ENCODE measurements at regions of chr7 and their contacts with region 1.

Region 1: DNA sequence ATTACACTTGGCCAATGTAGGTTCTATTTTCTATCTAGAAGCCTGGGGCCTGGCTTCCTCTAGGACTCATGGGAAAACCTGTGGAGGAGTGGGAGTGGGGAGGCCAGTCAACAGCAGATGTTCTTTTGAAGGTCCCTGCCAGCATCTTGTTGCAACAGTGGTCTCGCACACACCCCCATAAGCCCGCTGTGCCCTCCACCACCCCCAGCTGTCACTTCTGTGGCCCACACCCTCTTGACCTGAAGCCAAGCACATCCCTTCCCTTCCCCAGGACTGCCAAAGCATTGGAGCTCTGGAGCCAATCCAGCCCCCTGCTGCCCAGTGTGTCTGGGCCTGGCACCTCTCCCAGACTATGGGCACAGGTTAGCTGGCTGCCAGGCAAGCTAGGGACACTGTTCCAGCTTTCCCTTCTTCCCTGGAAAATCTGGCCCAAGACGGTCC is 1.9 kb upstream of the STX1A start:
- DNase-seq: no peak
- ATAC-seq: no peak
- H3K4me3 ChIP-seq: no peak overlapping the region
- H3K27ac ChIP-seq: no peak overlapping the region
- H3K4me1 ChIP-seq: peaks cover 10 to 33% of the 10 kb centered on the region in 2 donors
- H3K27me3 ChIP-seq: peaks cover 0 to 63% of the 10 kb centered on the region in 2 donors
- CTCF ChIP-seq: no peak

Region 2: GRCh38 chr7:73578342-73579127 is 142.9 kb before region 1 on chr7 and contains the start of gene TBL2:
- intact Hi-C with region 1: no loop called
- DNase-seq: peak; percentile 94 to 100 (median 99)
- ATAC-seq: peak; percentile 96
- H3K4me3 ChIP-seq: peak within 1 kb of the TSS; percentile 77 to 95
- H3K27ac ChIP-seq: peak within 1 kb of the TSS; percentile 87 to 91
- H3K4me1 ChIP-seq: peaks cover 7 to 65% of the 10 kb centered on the region in 2 donors
- H3K27me3 ChIP-seq: no peaks in the 10 kb centered on the region
- CTCF ChIP-seq: peak; percentile 0 to 18
- polyA plus RNA-seq, gene TBL2: 35.4 to 41.0 (median 39.8) TPM

Region 3: GRCh38 chr7:73606801-73607691 is 114.4 kb before region 1 on chr7:
- intact Hi-C with region 1: loop called (anchors 5 to 10 kb)
- DNase-seq: peak in 3 of 4 donors; percentile 31 to 92 (median 54)
- ATAC-seq: peak; percentile 84
- H3K4me3 ChIP-seq: no peak overlapping the region
- H3K27ac ChIP-seq: no peak overlapping the region
- H3K4me1 ChIP-seq: peaks cover 0 to 8% of the 10 kb centered on the region in 2 donors
- H3K27me3 ChIP-seq: peaks cover 0 to 69% of the 10 kb centered on the region in 2 donors
- CTCF ChIP-seq: peak; percentile 94

Region 4: GRCh38 chr7:73612598-73613269 is 108.7 kb before region 1 on chr7:
- intact Hi-C with region 1: loop called (anchors 5 to 10 kb)
- DNase-seq: peak in 1 of 4 donors; percentile 19
- ATAC-seq: peak; percentile 31
- H3K4me3 ChIP-seq: no peak overlapping the region
- H3K27ac ChIP-seq: no peak overlapping the region
- H3K4me1 ChIP-seq: no peaks in the 10 kb centered on the region
- H3K27me3 ChIP-seq: peaks cover 0 to 62% of the 10 kb centered on the region in 2 donors
- CTCF ChIP-seq: no peak

Region 5: GRCh38 chr7:73626814-73627213 is 94.6 kb before region 1 on chr7:
- intact Hi-C with region 1: no loop called
- DNase-seq: no peak
- ATAC-seq: no peak
- H3K4me3 ChIP-seq: no peak overlapping the region
- H3K27ac ChIP-seq: no peak overlapping the region
- H3K4me1 ChIP-seq: peaks cover 11 to 21% of the 10 kb centered on the region in 2 donors
- H3K27me3 ChIP-seq: peaks cover 26 to 88% of the 10 kb centered on the region in 2 donors
- CTCF ChIP-seq: no peak

Region 6: GRCh38 chr7:73638911-73639310 is 82.5 kb before region 1 on chr7:
- intact Hi-C with region 1: no loop called
- DNase-seq: no peak
- ATAC-seq: no peak
- H3K4me3 ChIP-seq: no peak overlapping the region
- H3K27ac ChIP-seq: no peak overlapping the region
- H3K4me1 ChIP-seq: no peaks in the 10 kb centered on the region
- H3K27me3 ChIP-seq: peaks cover 0 to 32% of the 10 kb centered on the region in 2 donors
- CTCF ChIP-seq: no peak

Measured in left lung (tissue), 14 donors.